Naive thymus-derived CD4-positive, alpha-beta T cell (primary cell): ENCODE measurements at regions of chr7 and their contacts with region 1.

Region 1: DNA sequence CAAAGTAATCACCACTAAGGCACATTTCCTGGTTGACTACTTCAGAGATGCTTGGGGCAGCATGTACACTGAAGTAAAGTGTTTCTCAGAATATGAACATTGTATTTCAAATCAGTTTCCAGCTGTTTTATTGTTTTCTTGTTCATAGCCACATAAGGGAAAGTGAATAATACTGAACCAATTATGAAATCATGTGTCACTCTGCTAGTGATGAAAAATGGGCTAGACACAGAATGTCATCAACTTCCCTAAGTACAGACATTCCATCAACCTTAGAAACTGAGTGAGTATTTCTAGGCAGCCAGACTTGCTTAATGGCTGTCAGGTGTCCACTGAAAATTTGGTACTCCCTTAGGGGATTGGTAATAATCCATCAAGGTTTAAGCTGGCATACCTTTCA is 603.5 kb downstream of the ARL4A start:
- DNase-seq: no peak
- ATAC-seq: no peak
- H3K4me3 ChIP-seq: no peak overlapping the region
- H3K4me3 Mint-ChIP-seq: no peak overlapping the region
- H3K27ac ChIP-seq: no peak overlapping the region
- H3K27ac Mint-ChIP-seq: no peak overlapping the region
- H3K4me1 ChIP-seq: no peaks in the 10 kb centered on the region
- H3K4me1 Mint-ChIP-seq: no peaks in the 10 kb centered on the region
- H3K27me3 ChIP-seq: no peaks in the 10 kb centered on the region
- H3K27me3 Mint-ChIP-seq: peaks cover 0 to 14% (median 0%) of the 10 kb centered on the region in 5 donors

Region 2: DNA sequence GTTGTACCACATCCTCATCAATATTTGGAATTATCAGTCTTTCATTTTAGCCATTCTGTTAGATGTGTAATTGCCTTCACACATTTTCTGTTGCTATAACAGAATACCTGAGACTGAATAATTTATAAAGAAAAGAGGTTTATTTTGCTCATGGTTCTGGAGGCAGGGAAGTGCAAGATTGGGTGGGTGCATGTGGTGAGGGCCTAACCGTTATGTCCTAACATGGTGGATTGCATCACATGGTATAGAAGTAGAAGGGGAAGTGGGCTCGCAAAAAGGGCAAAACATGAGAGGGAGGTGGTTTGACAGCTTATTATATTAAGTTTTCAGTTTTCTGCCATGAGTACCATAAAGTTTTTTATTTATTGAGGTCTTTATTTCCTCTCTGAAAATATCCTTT is 151.5 kb before region 1 on chr7:
- CTCF ChIA-PET with region 1: no interaction called
- POLR2A ChIA-PET with region 1: no interaction called
- intact Hi-C with region 1: no loop called
- DNase-seq: no peak
- ATAC-seq: no peak
- H3K4me3 ChIP-seq: no peak overlapping the region
- H3K4me3 Mint-ChIP-seq: no peak overlapping the region
- H3K27ac ChIP-seq: no peak overlapping the region
- H3K27ac Mint-ChIP-seq: no peak overlapping the region
- H3K4me1 ChIP-seq: no peaks in the 10 kb centered on the region
- H3K4me1 Mint-ChIP-seq: no peaks in the 10 kb centered on the region
- H3K27me3 ChIP-seq: no peaks in the 10 kb centered on the region
- H3K27me3 Mint-ChIP-seq: peaks cover 0 to 19% (median 13%) of the 10 kb centered on the region in 5 donors

Region 3: DNA sequence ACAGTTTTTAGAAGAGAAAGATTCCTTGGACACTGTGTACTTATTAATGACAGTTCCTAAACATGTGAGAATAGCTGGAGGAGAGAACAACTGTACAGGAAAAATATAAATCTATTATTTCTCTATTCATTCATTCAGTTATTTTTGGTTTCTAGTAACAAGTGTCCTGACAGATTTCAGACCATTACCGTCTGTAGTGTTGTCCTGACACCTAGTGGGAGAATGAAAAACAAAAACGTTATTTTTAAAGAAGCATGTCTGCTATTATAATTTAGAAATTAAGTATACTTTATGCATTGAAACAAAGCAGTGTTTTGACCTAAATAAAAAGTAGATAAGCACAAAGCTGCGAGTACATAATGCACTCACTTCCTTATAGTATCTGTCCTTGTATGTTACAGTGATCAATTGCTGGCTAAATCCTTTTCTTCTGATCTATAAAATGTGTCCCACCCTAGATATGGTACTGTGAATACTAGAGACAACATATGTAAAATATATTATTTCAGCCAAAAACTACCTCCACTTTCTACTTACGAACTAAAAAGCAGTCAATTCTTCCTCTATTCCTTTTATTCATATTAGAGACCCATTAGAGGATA is 27.9 kb before region 1 on chr7:
- CTCF ChIA-PET with region 1: no interaction called
- POLR2A ChIA-PET with region 1: no interaction called
- intact Hi-C with region 1: no loop called
- DNase-seq: peak in 6 of 9 donors; percentile 4 to 42 (median 22)
- ATAC-seq: peak; percentile 52
- H3K4me3 ChIP-seq: no peak overlapping the region
- H3K4me3 Mint-ChIP-seq: no peak overlapping the region
- H3K27ac ChIP-seq: no peak overlapping the region
- H3K27ac Mint-ChIP-seq: no peak overlapping the region
- H3K4me1 ChIP-seq: no peaks in the 10 kb centered on the region
- H3K4me1 Mint-ChIP-seq: no peaks in the 10 kb centered on the region
- H3K27me3 ChIP-seq: no peaks in the 10 kb centered on the region
- H3K27me3 Mint-ChIP-seq: peaks cover 0 to 11% (median 5%) of the 10 kb centered on the region in 5 donors

Region 4: GRCh38 chr7:13742811-13743210 is 451.8 kb after region 1 on chr7:
- CTCF ChIA-PET with region 1: no interaction called
- POLR2A ChIA-PET with region 1: no interaction called
- intact Hi-C with region 1: loop called in 1 of 2 experiments (anchors 10 kb)
- DNase-seq: no peak
- ATAC-seq: no peak
- H3K4me3 ChIP-seq: no peak overlapping the region
- H3K4me3 Mint-ChIP-seq: no peak overlapping the region
- H3K27ac ChIP-seq: no peak overlapping the region
- H3K27ac Mint-ChIP-seq: no peak overlapping the region
- H3K4me1 ChIP-seq: no peaks in the 10 kb centered on the region
- H3K4me1 Mint-ChIP-seq: no peaks in the 10 kb centered on the region
- H3K27me3 ChIP-seq: no peaks in the 10 kb centered on the region
- H3K27me3 Mint-ChIP-seq: peaks cover 0 to 3% (median 0%) of the 10 kb centered on the region in 5 donors